AG04450 (cell line): ENCODE measurements at regions of chr2 and their contacts with region 1.

Region 1: GRCh38 chr2:215791481-215791937 is 221.8 kb downstream of the MREG start:
- DNase-seq: no peak
- H3K4me3 ChIP-seq: no peak overlapping the region
- H3K27ac ChIP-seq: no peak overlapping the region
- H3K27me3 ChIP-seq: no peaks in the 10 kb centered on the region
- CTCF ChIP-seq: no peak

Region 2: DNA sequence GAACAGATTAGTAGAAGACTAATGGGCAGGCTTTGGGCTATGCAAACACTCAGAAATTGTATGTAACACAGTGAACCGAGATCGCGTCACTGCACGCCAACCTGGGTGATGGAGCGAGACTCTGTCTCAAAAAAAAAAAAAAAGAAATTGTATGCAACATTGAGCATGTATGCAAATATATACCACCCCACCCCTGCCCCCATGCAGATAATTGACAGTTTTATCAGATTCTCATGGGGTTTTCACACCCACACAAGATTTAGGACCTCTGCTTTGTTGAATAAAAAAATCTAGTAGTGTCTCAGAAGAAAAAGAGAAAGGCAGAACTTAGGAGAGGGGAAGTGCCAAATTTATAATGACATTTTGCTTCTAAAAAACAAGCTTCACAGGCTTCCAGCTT is 224.0 kb before region 1 on chr2:
- CTCF ChIA-PET with region 1: interaction called, 10 read pairs
- POLR2A ChIA-PET with region 1: no interaction called
- DNase-seq: no peak
- H3K4me3 ChIP-seq: no peak overlapping the region
- H3K27ac ChIP-seq: no peak overlapping the region
- H3K27me3 ChIP-seq: no peaks in the 10 kb centered on the region
- CTCF ChIP-seq: no peak

Region 3: GRCh38 chr2:216034065-216034464 is 242.6 kb after region 1 on chr2:
- CTCF ChIA-PET with region 1: no interaction called
- POLR2A ChIA-PET with region 1: no interaction called
- DNase-seq: peak; percentile 42
- H3K4me3 ChIP-seq: no peak overlapping the region
- H3K27ac ChIP-seq: no peak overlapping the region
- H3K27me3 ChIP-seq: no peaks in the 10 kb centered on the region
- CTCF ChIP-seq: peak; percentile 88